ENCODE measurements at regions of chr9 and their contacts with region 1.

Region 1: DNA sequence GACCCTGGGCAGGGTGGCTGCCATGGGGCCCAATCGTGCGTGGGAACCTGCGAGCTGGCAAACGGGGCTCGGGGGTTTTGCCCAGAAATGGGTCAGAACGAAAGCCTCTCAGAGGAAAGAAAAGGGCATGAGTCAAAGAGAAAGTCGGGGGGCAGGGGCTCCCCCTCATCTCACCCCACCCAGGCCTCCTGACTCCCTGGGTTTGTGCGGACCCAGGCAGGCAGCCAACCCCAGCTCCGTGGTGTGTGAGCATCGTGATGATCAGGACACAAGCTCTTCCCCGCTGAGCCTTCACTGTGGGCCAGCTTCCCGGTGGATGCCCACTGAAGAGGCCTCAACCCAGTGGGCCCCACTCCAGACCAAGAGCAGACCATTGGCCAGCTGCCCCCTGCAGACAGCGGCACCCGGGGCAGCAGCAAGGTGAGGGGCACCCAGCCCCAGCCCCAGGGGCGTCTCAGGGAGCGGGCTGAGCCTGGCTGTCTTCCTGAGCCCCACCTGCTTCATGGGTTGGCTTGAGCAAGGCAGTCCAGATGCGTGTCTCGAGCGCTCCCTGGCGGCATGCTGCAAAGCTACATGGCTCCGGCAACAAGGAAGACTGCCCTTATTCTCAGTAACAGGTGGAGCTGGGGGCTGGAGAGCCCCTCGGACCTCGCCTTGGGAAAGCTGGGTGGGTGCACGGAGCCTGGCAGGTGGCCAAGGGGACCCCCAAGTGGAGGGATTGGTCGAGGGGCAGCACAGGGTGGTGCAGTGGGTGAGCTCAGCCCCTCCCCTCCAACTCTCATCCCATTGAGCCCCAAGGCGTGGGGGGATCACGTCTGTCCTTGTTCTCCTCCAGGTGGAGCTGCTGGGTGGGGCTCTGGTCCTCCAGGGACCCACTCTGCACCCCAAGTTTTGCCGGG is 3.2 kb upstream of the FUT7 start:
- DNase-seq: peak; percentile 63
- H3K4me3 ChIP-seq: no peak overlapping the region
- CTCF ChIP-seq: peak; percentile 93

Region 2: DNA sequence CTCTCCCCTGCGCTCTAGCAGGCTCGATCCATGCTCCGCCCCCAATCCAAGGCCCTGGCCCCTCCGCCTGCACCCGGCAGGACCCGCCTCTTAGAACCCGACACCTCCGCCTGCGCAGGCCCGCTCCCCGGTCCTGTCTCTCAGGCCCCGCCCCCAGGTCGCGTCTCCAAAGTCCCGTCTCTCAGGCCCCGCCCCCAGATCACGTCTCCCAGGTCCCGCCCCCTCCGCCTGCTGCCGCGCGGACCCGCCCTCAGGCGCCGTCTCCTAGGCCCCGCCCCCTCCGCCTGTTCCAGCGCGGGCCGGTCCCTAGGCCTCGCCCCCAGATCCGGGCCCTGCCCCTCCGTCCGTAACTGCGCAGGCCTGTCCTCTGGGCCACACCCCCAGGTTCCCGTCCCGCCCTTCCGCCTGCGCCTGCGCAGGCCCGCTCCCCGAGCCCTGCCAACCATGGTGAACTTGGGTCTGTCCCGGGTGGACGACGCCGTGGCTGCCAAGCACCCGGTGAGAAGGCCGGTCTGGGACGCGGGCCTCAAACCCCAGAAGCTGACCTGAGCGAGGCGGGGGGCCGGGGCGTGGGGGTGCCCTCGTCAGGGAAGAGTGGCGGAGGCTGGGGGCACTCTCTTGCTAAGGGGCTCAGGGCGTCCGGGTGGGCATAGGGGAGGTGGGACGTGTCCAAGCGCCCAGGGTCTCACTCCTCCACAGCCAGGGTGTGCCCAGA is 244.0 kb before region 1 on chr9 and contains the start of gene TMEM141:
- in situ Hi-C with region 1: loop called (anchors 25 kb)
- DNase-seq: peak; percentile 96
- H3K4me3 ChIP-seq: peak within 1 kb of the TSS; percentile 84
- CTCF ChIP-seq: no peak

Region 3: DNA sequence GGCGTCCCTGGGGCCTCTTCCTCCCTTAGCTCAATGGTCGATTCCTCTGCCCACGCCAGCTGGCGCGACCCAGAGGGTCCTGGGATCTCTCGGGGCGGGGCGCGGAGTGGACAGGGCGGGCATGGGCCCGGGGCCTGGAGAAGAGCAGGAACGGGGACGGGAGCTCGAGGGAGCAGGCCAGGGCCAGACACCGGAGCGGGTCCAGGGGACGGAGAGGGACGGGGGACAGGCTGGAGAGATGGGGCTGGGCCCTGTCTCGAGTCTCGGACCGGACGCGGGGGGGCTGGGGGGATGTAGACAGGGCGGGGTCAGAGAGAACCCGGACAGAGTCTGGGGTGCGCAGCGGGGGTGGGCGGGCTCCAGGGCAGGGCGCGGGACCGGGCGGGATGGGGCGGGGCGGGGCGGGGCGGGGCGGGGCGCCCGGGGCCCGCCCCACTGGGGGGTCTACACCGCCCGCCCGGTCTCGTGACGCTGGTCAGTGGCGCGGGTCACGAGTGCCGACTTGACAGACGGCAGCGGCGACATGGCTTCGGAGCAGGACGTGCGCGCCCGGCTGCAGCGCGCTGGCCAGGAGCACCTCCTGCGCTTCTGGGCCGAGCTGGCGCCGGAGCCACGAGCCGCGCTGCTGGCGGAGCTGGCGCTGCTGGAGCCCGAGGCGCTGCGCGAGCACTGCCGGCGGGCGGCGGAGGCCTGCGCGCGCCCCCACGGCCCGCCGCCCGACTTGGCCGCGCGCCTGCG is 42.1 kb after region 1 on chr9 and contains the start of gene UAP1L1:
- in situ Hi-C with region 1: no loop called
- DNase-seq: no peak
- H3K4me3 ChIP-seq: peak within 1 kb of the TSS; percentile 56
- CTCF ChIP-seq: no peak